ENCODE measurements at regions of chr17 and their contacts with region 1.

Region 1: GRCh38 chr17:82098072-82098821 is at the start of gene FASN:
- DNase-seq: peak; percentile 92 to 96 (median 93)
- ATAC-seq: peak; percentile 66 to 84 (median 80)
- H3K4me3 ChIP-seq: peak within 1 kb of the TSS; percentile 65 to 95 (median 82)
- H3K27ac ChIP-seq: peak within 1 kb of the TSS; percentile 69 to 99 (median 96)
- H3K4me1 ChIP-seq: peaks cover 0 to 43% (median 23%) of the 10 kb centered on the region in 12 donors
- H3K27me3 ChIP-seq: no peaks in the 10 kb centered on the region
- CTCF ChIP-seq: peak in 11 of 12 donors; percentile 6 to 61 (median 45)
- POLR2A ChIP-seq: peak; percentile 95 to 98
- total RNA-seq, gene FASN: 6.9 to 103 (median 18.9) TPM

Region 2: GRCh38 chr17:81977211-81978027 is 120.8 kb before region 1 on chr17 and contains the start of gene ASPSCR1:
- intact Hi-C with region 1: loop called in 1 of 10 experiments (anchors 2 kb)
- DNase-seq: peak; percentile 93 to 97 (median 93)
- ATAC-seq: peak; percentile 88 to 98 (median 98)
- H3K4me3 ChIP-seq: peak within 1 kb of the TSS; percentile 54 to 96 (median 88)
- H3K27ac ChIP-seq: peak within 1 kb of the TSS; percentile 75 to 95 (median 88)
- H3K4me1 ChIP-seq: peaks cover 0 to 21% (median 14%) of the 10 kb centered on the region in 12 donors
- H3K27me3 ChIP-seq: peaks cover 0 to 3% (median 0%) of the 10 kb centered on the region in 9 donors
- CTCF ChIP-seq: no peak
- POLR2A ChIP-seq: peak in 1 of 2 donors; percentile 89
- total RNA-seq, gene ASPSCR1: 15.1 to 27.8 (median 22.5) TPM

Region 3: GRCh38 chr17:82022981-82023374 is 75.3 kb before region 1 on chr17 and contains the start of gene LRRC45:
- intact Hi-C with region 1: loop called in 1 of 10 experiments (anchors 1 kb)
- DNase-seq: peak; percentile 100
- ATAC-seq: peak; percentile 94 to 98 (median 96)
- H3K4me3 ChIP-seq: peak within 1 kb of the TSS; percentile 77 to 99 (median 94)
- H3K27ac ChIP-seq: peak within 1 kb of the TSS in 11 of 12 donors; percentile 32 to 85 (median 73)
- H3K4me1 ChIP-seq: peaks cover 5 to 37% (median 23%) of the 10 kb centered on the region in 12 donors
- H3K27me3 ChIP-seq: no peaks in the 10 kb centered on the region
- CTCF ChIP-seq: no peak
- POLR2A ChIP-seq: no peak
- total RNA-seq, gene LRRC45: 2.9 to 7.5 (median 5.6) TPM

Region 4: DNA sequence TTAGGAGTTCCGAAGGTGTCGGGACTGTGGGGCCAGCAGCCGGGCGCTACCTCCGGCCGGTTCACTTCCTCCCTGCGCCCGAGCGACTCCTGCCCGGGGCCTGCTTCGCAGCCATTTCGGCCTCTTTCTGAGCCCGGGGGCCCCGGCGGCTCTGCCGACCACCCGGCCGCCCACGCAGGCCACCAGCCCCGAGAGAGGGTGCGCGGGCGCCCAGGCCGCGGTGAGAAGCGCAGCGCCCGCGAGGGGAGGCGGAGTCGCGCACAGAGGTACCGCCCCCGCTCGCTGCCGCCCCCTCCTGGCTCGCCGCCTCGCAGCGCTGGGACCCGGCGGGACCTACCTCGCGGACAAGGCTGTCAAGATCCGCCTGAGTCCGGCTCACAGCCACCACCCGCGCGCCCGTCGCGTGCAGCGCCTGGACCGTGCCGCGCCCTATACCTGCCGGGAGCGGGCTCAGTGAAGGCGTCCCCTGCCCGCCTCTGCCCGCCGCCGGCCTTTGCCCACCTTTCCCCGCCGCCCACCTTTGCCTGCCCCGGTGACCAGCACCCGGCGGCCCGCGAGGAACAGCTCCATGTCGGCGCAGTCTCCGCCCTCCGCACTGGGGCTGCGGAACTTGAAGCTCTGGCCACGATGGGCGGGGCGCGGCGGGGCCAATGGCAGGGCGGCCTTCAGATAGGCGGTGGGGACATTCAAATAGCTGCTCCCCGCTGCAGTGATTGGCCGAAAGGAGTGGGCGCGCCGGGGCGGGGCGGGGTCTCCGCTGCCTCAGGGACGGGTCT is 60.9 kb before region 1 on chr17 and contains the start of gene DCXR:
- intact Hi-C with region 1: loop called in 3 of 10 experiments (anchors 1 to 10 kb)
- DNase-seq: peak; percentile 97 to 99 (median 98)
- ATAC-seq: peak; percentile 97 to 98 (median 97)
- H3K4me3 ChIP-seq: peak within 1 kb of the TSS; percentile 49 to 92 (median 73)
- H3K27ac ChIP-seq: peak within 1 kb of the TSS; percentile 91 to 98 (median 94)
- H3K4me1 ChIP-seq: peaks cover 4 to 31% (median 15%) of the 10 kb centered on the region in 12 donors
- H3K27me3 ChIP-seq: peaks cover 0 to 4% (median 0%) of the 10 kb centered on the region in 9 donors
- CTCF ChIP-seq: peak; percentile 72 to 93 (median 82)
- POLR2A ChIP-seq: peak; percentile 75 to 96
- total RNA-seq, gene DCXR: 139 to 312 (median 185) TPM

Region 5: DNA sequence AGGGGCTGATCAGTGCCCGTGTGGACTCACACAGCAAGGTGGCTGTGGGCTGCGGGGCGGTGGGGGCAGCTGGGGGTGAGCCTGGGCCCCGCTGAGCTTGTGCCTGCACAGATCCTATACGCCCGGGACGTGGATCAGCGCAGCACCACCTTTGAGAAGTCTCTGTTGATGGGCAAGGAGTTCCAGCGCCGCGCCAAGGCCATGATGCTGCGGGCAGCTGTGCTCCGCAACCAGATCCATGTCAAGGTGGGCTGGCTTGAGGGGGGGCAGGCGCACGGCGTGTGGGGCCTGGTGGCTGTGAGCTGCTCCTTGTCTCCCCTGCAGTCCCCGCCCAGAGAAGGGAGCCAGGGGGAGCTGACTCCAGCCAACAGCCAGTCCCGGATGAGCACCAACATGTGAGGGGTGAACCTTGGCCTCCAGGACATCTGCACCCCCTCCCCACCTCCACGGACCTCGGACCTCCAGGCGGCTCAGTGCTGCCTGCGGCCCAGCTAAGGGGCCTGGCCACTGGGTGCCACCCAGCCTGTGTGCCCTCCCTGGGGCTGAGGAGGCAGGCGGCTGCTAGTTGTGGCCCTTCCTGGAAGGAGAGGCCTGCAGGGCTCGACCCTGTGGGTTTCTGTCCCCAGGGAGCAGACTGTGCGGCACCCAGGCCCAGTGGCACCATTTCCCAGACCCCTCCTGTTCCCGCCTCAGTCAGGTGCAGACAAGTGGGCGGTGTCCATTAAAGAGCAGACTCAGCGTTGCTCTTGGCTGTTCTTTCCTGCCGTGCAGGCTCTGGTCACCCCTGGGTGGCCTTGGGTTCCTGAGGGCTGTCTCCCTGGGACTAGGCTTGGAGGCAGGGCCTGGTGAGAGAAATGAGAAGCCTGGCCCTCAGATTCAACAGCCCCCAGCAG is 41.3 kb before region 1 on chr17:
- intact Hi-C with region 1: loop called in 1 of 10 experiments (anchors 5 kb)
- DNase-seq: peak in 2 of 5 donors; percentile 24 to 61
- ATAC-seq: no peak
- H3K4me3 ChIP-seq: no peak overlapping the region
- H3K27ac ChIP-seq: no peak overlapping the region
- H3K4me1 ChIP-seq: peaks cover 0 to 19% (median 15%) of the 10 kb centered on the region in 12 donors
- H3K27me3 ChIP-seq: no peaks in the 10 kb centered on the region
- CTCF ChIP-seq: no peak
- POLR2A ChIP-seq: no peak

Region 6: DNA sequence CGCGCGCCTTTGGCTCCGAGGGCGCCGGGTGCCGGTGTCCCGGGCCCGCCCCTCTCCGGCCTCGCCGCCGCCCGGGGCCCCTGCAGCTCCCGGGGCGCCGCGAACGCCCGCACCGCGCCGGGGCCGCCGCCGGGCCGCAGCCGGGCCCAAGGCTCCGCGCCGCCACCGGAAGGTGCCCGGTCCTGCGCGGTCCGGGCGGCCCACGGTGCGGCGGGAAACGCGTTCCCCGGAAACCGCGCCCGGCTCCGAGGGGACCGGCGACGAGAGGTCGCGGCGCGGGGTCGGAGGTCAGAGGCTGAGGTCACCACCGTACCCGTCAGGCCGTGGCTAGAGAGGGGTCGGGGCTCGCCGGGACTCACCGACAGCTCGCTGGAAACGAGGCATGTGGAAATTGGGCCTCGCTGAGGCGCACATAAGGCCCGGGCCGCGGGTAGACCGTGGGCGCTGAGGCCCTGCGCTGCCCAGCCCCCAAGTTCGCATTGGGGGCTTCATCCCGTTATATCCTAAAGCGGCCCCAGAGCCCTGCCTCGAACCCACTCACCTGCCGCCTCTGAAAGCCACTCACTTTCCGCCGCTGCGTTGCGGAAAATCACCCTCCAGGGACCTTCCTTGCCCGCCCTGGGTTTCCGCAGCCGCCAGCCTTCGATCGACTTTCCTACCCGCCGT is 32.5 kb before region 1 on chr17 and contains the start of gene DUS1L:
- intact Hi-C with region 1: loop called in 2 of 10 experiments (anchors 2 kb)
- DNase-seq: peak; percentile 63 to 88 (median 72)
- ATAC-seq: peak; percentile 36 to 84 (median 82)
- H3K4me3 ChIP-seq: peak within 1 kb of the TSS; percentile 78 to 98 (median 93)
- H3K27ac ChIP-seq: peak within 1 kb of the TSS; percentile 59 to 93 (median 88)
- H3K4me1 ChIP-seq: peaks cover 0 to 27% (median 19%) of the 10 kb centered on the region in 12 donors
- H3K27me3 ChIP-seq: no peaks in the 10 kb centered on the region
- CTCF ChIP-seq: no peak
- POLR2A ChIP-seq: peak in 1 of 2 donors; percentile 50
- total RNA-seq, gene DUS1L: 41.5 to 84.7 (median 59.4) TPM

Measured in heart left ventricle (tissue), 16 donors.